Aorta (tissue), 5 donors: ENCODE measurements at regions of chr3 and their contacts with region 1.

Region 1: GRCh38 chr3:111810909-111811308 is 48.2 kb upstream of the PHLDB2 start:
- DNase-seq: no peak
- ATAC-seq: no peak
- H3K4me3 ChIP-seq: no peak overlapping the region
- H3K27ac ChIP-seq: no peak overlapping the region
- H3K4me1 ChIP-seq: peaks cover 0 to 6% of the 10 kb centered on the region in 2 donors
- H3K27me3 ChIP-seq: no peaks in the 10 kb centered on the region

Region 2: GRCh38 chr3:111846717-111847116 is 35.8 kb after region 1 on chr3:
- intact Hi-C with region 1: loop called in 1 of 2 experiments (anchors 5 kb)
- DNase-seq: no peak
- ATAC-seq: no peak
- H3K4me3 ChIP-seq: no peak overlapping the region
- H3K27ac ChIP-seq: no peak overlapping the region
- H3K4me1 ChIP-seq: peaks cover 0 to 2% of the 10 kb centered on the region in 2 donors
- H3K27me3 ChIP-seq: no peaks in the 10 kb centered on the region